ENCODE measurements at regions of chr10 and their contacts with region 1.

Region 1: DNA sequence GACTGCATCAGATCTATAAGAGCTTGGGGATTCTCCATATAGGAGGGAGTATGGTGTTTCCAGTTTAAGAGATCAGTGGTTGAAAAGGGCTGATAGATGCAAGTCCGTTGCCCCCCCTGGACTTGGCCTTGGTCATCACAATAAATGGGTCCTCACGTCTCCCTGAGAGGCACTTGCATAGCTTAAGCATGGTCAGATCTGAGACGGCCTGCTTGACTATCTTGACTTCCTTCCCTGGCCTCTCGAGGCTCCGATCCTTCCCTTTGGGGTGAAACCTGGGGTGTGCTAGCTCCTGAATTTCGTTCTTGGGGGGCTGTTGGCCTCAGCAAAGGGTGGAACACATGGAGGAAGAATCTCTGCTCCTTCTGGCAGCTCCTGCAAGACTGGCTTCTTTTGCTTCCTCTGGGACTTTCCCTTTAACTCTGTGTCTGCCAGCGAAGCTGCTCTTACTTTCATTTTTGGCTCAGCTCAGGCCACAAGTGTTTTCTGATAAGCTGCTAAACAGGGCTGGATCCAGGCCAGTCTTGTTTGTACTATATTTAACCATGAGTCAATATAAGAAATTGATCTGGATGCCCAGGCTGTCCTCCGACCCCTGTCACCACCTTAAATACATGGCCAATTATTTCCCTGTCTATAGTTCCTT is 11.2 kb upstream of the ZNF485 start:
- DNase-seq: peak; percentile 29
- H3K4me3 Mint-ChIP-seq: peak overlapping the region; percentile 51
- H3K27ac Mint-ChIP-seq: no peak overlapping the region
- H3K4me1 Mint-ChIP-seq: peaks cover 22% of the 10 kb centered on the region
- H3K27me3 Mint-ChIP-seq: peaks cover 16% of the 10 kb centered on the region

Region 2: DNA sequence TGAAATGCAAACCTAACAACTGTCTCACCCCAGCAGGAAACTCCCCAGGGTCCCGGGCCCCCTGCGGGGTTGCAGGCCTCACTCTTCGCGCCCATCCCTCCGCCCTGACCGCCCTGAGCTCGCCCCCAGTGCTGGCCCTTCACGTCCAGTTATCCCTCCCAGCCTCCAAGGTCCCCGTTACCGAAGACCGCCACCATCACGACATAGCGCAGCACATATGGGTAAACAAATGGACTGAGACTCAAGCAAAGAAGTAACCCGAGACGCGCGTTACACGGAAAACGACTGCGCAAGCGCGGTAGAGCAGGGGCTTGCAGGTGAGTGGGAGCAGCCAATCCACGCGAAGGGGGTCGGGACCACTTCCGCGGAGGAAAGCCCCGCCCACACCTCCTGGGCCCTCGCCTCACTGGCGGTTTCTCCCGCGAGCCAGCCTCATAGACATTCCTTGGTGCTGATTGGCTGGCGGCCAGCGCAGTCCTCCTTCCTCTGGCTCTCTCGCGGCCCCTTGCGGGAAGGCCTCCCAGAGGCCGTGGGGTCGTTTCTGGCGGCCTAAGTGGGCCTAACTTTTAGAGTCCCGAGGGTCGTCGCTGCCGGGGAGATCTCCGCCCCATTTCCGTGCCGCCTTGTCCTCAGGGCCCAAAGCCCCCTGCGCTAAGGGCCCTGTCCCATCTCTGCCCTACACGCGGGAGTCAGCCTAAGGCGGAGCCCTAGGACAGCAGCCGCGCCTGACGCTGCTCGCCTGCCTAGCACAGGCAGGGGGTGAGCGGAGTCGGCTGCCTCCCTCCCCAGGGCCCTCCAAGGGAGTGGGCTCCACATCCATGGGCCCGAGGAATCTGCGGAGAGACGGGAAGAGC is 232.9 kb before region 1 on chr10:
- intact Hi-C with region 1: no loop called
- DNase-seq: peak; percentile 98
- H3K4me3 Mint-ChIP-seq: peak overlapping the region; percentile 98
- H3K27ac Mint-ChIP-seq: peak overlapping the region; percentile 99
- H3K4me1 Mint-ChIP-seq: peaks cover 25% of the 10 kb centered on the region
- H3K27me3 Mint-ChIP-seq: peaks cover 1% of the 10 kb centered on the region

Region 3: DNA sequence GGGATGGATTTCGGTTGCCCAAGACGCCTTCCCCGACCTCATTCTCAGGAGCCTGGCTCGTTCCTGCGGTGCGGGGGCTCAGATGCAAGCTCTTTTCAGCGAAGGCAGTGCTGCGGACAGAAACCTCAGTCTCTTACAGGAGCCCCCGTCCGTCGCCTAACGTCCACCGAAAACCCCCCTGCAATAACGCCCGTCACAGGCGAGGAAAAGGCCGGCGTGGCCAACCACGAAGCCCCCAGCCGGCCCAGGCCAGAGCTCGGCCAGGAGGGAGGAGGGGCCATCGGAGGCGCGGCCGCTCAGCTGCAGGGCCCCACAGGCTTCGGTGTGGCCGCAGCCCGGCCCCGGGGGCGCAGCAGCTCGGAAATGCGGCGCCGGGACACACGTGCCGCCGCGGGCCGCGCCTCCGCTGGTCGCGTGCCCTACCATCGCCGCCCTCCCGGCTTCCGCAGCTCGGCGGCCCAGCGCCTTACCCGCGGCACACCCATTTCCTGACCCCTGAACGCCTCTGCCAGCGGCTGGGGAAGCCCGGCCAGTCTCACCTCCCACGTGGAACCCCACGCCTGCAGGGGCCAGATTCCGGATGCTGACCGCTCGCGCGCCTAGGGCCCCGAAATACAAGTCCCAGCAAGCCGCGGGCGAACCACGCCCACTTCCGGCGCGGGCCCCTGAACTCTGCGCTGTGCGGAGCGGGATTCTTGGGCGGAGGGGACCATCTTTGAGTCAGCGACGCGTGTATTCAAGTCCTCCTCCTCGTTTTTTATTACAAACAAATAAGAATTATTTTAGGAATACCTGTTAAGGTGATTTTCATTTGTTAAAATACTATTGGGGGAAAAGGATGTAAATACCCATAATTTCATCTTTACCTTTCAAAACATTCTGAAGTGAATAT is 20.8 kb before region 1 on chr10 and contains the start of gene ZNF239:
- intact Hi-C with region 1: loop called (anchors 1 kb)
- DNase-seq: peak; percentile 48
- H3K4me3 Mint-ChIP-seq: peak within 1 kb of the TSS; percentile 57
- H3K27ac Mint-ChIP-seq: peak within 1 kb of the TSS; percentile 45
- H3K4me1 Mint-ChIP-seq: peaks cover 17% of the 10 kb centered on the region
- H3K27me3 Mint-ChIP-seq: no peaks in the 10 kb centered on the region
- total RNA-seq, gene ZNF239: 1.4 and 1.7 TPM in 2 replicates

Region 4: DNA sequence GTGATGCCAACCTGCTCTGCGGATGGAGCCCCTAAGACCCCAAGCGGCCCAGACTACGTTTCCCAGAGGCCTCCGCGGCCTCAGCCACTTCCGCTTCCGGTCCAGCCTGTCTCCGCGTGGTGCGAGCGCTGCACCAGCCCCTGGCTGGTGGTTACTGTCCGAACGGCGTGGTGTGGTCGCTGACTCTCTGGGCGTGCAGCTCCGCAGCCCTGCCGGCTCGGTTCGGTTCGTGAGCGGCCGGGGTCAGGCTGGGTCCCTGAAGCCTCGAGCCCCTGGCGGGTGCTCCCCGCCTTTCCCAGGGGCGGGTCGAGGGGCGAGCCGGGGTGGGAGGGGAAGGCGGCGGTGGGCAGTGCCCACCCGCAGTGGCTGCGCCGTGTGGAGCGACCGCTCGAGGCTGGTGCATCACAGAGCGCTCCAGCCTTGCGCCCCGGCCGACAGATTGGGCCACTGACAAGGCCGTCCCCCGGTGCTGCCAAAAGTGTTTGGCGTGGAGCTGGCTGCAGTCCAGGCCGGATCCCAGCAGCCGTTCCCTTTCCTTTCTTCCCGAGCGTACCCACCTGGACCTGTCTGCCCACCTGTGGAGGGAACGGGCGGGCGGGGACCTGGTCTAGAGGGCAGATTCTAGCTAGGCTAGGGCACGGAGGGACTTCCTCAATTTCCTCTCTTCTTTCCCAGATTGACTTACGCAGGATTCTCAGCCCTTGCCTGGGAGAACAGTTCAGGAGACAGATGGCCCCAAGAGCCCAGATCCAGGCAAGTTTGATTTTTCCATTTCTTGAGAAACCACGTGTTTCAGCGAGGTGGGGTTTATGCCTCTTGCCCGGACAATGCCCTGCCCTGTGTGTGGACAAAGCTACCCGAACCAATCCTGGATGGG is 11.5 kb after region 1 on chr10 and contains the start of gene ZNF485:
- intact Hi-C with region 1: loop called (anchors 1 kb)
- DNase-seq: peak; percentile 34
- H3K4me3 Mint-ChIP-seq: peak within 1 kb of the TSS; percentile 84
- H3K27ac Mint-ChIP-seq: peak within 1 kb of the TSS; percentile 53
- H3K4me1 Mint-ChIP-seq: peaks cover 26% of the 10 kb centered on the region
- H3K27me3 Mint-ChIP-seq: no peaks in the 10 kb centered on the region
- total RNA-seq, gene ZNF485: 5.7 and 6.6 TPM in 2 replicates

Region 5: DNA sequence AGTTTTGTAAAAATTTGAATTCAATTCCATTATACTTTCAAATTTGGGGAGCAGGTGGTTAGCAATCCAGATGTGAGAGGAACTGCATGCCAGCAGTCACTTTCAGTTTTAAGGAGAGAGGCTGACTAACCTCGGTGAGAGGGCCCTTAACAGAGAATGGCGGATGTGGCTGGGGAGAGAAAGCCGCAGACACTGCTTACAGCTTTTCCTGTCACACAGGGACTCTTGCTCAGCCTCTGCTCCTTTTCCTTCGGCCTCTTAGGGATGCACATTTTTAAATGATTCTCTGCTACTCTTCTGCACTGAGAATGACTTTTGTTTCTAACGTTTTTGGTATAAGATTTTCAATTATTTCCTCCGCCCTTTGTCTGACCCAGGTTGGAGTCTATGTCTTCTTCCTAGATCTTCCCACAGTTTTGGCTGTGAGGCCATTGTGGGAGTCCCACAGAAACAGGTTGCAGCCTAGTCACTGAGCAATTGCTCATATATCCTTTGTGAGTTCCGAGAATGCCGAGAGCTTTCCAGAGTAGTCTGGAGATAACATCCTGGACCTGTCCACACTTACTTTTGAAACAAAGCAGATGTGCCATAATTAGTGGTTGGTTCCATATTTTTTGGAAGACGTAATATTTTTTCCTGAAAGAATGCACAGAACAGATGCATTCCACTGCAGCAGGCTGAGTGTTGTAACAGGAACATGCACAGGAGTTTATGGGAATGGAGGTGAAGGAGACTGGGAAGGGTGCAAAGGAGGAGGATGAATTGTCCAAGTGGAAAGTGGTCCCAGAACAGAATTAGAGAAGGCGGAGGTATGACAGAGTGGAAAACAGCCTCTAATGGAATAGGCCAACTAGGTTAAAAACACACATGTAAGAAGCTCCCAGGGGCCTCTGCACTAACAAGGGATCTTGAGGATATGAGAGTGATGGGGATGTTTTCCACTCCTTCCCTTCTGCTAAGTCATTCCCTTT is 221.6 kb after region 1 on chr10:
- intact Hi-C with region 1: loop called (anchors 10 kb)
- DNase-seq: peak; percentile 74
- H3K4me3 Mint-ChIP-seq: peak overlapping the region; percentile 70
- H3K27ac Mint-ChIP-seq: peak overlapping the region; percentile 69
- H3K4me1 Mint-ChIP-seq: peaks cover 30% of the 10 kb centered on the region
- H3K27me3 Mint-ChIP-seq: peaks cover 32% of the 10 kb centered on the region